Activated CD8-positive, alpha-beta T cell treated with anti-CD3 and anti-CD28 coated beads for 36 hours (primary cell): ENCODE measurements at regions of chr14 and their contacts with region 1.

Region 1: DNA sequence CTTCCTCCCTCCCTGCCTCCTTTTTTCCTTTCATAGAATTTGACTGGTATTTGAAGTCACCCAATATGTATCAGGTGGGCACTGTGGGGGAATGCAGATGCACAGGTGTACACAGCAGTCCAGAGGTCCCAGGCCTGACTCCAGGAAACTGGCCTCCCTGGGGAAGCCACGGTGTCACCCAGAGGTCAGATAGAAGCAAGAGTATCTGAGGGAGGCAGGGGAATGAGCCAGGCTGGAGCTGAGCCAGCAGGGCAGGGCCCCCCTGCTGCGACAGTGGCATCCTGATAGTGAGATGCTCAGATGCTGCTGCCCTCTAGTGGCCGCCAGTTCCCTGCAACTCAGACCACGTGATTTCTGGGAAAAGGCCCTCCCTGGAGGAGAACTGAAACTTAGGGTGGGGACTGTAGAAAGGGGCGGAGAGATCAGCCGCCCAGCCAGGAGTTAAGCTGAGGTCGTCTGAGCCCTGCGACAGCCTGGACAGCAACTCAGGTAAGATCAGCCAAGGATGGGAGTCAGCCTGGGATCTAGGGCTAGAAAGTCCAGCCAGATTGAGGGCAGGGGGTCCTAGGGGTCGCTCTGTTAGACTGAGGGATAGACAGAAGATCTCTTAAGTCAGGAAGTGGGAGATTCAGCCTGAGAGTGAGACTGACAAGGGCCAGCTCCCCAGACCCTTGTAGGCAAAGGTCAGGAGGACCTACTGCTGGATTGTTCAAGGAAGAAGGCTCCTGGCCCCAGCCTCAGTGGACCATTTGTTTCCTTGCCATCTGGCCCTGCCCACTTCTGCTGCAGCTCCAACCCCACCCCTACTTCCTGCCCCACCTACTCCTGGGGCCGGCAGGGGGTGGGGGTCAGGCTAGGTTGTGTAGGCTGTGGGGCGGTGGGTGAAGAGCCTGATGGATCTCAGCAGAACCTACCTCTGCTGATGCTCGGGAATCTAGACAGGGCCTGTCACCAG is at the start of gene IRF9:
- DNase-seq: peak; percentile 99
- ATAC-seq: peak; percentile 88
- H3K4me3 Mint-ChIP-seq: peak within 1 kb of the TSS; percentile 91
- H3K27ac Mint-ChIP-seq: peak within 1 kb of the TSS; percentile 99
- H3K4me1 Mint-ChIP-seq: peaks cover 39% of the 10 kb centered on the region
- H3K27me3 Mint-ChIP-seq: no peaks in the 10 kb centered on the region
- CTCF ChIP-seq: peak; percentile 81
- total RNA-seq, gene IRF9: 112 to 118 TPM

Region 2: DNA sequence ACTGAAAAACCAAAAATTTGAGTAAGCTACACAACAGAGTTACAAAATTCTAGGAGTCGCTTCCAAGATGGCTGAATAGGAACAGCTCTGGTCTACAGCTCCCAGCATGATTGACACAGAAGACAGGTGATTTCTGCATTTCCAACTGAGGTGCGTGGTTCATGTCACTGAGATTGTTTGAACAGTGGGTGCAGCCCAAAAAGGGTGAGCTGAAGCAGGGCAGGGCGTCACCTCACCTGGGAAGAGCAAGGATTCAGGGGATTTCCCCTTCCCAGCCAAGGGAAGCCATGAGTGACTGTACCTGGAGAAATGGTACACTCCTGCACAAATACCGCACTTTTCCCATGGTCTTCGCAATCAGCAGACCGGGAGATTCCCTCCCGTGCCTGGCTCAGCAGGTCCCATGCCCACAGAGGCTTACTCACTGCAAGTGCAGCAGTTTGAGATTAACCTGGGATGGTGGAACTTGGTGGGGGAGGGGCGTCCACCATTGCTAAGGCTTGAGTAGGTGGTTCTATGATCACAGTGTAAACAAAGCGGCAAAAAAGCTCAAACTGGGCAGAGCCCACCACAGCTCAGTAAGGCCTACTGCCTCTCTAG is 218.6 kb before region 1 on chr14:
- CTCF ChIA-PET with region 1: no interaction called
- POLR2A ChIA-PET with region 1: no interaction called
- intact Hi-C with region 1: no loop called
- DNase-seq: no peak
- ATAC-seq: no peak
- H3K4me3 Mint-ChIP-seq: no peak overlapping the region
- H3K27ac Mint-ChIP-seq: no peak overlapping the region
- H3K4me1 Mint-ChIP-seq: peaks cover 6% of the 10 kb centered on the region
- H3K27me3 Mint-ChIP-seq: no peaks in the 10 kb centered on the region
- CTCF ChIP-seq: no peak

Region 3: GRCh38 chr14:24036169-24036962 is 124.8 kb before region 1 on chr14:
- CTCF ChIA-PET with region 1: no interaction called
- POLR2A ChIA-PET with region 1: no interaction called
- intact Hi-C with region 1: no loop called
- DNase-seq: peak; percentile 75
- ATAC-seq: peak; percentile 84
- H3K4me3 Mint-ChIP-seq: peak overlapping the region; percentile 82
- H3K27ac Mint-ChIP-seq: peak overlapping the region; percentile 75
- H3K4me1 Mint-ChIP-seq: peaks cover 9% of the 10 kb centered on the region
- H3K27me3 Mint-ChIP-seq: no peaks in the 10 kb centered on the region
- CTCF ChIP-seq: peak; percentile 73

Region 4: GRCh38 chr14:24108336-24108874 is 52.7 kb before region 1 on chr14:
- CTCF ChIA-PET with region 1: interaction called, 47 read pairs
- POLR2A ChIA-PET with region 1: interaction called, 24 read pairs
- intact Hi-C with region 1: no loop called
- DNase-seq: no peak
- ATAC-seq: peak; percentile 31
- H3K4me3 Mint-ChIP-seq: peak overlapping the region; percentile 60
- H3K27ac Mint-ChIP-seq: peak overlapping the region; percentile 99
- H3K4me1 Mint-ChIP-seq: peaks cover 20% of the 10 kb centered on the region
- H3K27me3 Mint-ChIP-seq: no peaks in the 10 kb centered on the region
- CTCF ChIP-seq: no peak

Region 5: DNA sequence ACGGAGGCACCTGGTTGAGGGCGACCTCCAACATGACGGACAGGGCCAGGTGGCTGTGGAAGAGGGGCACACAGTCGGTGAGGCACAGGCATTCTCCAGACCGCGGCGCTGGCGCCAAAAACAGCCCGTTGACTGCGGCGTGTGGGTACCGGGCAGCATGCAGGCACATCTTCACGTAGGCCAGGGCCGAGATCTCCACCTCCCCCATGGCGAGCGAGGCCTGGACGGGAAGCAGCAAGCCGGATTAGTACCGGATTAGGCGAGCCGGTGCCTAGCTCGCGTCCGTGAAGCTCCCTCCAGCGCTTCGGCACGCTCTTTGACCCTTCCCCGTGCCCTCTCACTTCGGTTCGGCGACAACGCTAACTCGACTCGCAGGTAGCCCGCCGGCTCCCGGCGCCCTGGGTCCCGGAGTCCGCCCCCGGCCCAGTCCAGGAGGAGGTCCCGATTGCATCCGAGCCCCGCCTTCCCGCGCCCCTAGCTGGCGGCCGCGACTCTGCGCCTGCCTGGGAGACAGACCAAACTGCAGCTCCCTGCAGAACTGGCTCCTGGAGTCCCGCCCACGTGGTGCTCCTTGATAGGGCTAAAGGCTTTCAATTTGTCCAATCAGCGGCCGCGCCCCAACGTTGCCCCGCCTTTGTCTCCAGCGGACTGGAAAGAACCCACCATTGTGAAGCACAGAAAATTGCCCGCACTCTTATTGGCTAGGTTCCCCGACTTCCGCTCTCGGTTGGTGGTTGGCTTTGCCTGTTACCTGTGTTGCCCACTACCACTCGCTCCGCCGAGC is 19.8 kb before region 1 on chr14 and contains the start of gene EMC9:
- CTCF ChIA-PET with region 1: interaction called, 91 read pairs
- POLR2A ChIA-PET with region 1: interaction called, 178 read pairs
- intact Hi-C with region 1: no loop called
- DNase-seq: peak; percentile 100
- ATAC-seq: peak; percentile 87
- H3K4me3 Mint-ChIP-seq: peak within 1 kb of the TSS; percentile 97
- H3K27ac Mint-ChIP-seq: peak within 1 kb of the TSS; percentile 97
- H3K4me1 Mint-ChIP-seq: peaks cover 68% of the 10 kb centered on the region
- H3K27me3 Mint-ChIP-seq: no peaks in the 10 kb centered on the region
- CTCF ChIP-seq: peak; percentile 39
- total RNA-seq, gene EMC9: 39.0 to 39.9 TPM

Region 6: DNA sequence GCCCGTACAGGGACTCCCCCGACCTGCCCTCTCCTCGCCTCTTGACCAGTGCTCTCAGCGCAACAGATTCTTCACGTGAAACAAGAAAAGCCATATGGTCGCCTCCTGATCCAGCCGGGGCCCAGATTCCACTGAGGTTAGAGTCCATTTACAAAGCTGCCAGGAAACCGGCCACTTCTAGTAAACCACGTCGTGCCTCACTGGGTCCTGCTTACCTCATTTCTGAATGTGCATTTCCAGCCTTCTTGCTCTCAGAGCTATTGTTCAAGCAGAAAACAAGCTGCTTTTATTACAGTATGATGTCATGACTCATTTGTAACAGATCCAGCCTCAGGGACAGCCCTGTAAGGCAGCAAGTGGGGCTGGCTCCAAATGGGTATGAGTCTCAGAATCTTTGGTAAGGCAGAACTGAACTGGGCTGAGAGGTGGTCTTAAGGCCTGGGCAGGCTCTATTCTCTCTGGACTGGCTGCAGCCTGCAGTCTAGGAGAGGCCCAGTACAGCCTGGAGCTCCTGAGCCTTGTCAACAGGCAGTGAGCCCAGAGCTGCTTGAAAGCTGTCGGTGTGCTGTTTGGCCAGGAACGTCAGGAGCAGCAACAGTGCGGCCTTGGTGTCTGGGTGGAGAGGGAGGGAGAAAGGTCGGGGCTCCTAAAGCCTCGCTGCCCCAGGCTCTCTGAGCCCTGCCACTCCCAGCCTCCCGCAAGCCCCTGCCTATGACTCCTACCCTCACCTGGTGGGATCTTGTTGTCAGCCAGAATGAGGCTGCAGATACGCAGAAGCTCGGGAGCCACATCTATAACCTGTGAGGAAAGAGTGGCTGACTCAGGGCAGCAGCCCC is 19.1 kb after region 1 on chr14:
- CTCF ChIA-PET with region 1: interaction called, 13 read pairs
- POLR2A ChIA-PET with region 1: interaction called, 90 read pairs
- intact Hi-C with region 1: no loop called
- DNase-seq: no peak
- ATAC-seq: no peak
- H3K4me3 Mint-ChIP-seq: no peak overlapping the region
- H3K27ac Mint-ChIP-seq: peak overlapping the region; percentile 5
- H3K4me1 Mint-ChIP-seq: peaks cover 2% of the 10 kb centered on the region
- H3K27me3 Mint-ChIP-seq: no peaks in the 10 kb centered on the region
- CTCF ChIP-seq: no peak

Region 7: GRCh38 chr14:24215495-24216344 is 54.6 kb after region 1 on chr14 and contains the start of gene MDP1:
- CTCF ChIA-PET with region 1: interaction called, 4 read pairs
- POLR2A ChIA-PET with region 1: interaction called, 14 read pairs
- intact Hi-C with region 1: no loop called
- DNase-seq: peak; percentile 91
- ATAC-seq: peak; percentile 74
- H3K4me3 Mint-ChIP-seq: peak within 1 kb of the TSS; percentile 97
- H3K27ac Mint-ChIP-seq: peak within 1 kb of the TSS; percentile 98
- H3K4me1 Mint-ChIP-seq: peaks cover 40% of the 10 kb centered on the region
- H3K27me3 Mint-ChIP-seq: no peaks in the 10 kb centered on the region
- CTCF ChIP-seq: peak; percentile 45
- total RNA-seq, gene MDP1: 11.2 to 11.3 TPM